ENCODE measurements at regions of chr20 and their contacts with region 1.

Region 1: DNA sequence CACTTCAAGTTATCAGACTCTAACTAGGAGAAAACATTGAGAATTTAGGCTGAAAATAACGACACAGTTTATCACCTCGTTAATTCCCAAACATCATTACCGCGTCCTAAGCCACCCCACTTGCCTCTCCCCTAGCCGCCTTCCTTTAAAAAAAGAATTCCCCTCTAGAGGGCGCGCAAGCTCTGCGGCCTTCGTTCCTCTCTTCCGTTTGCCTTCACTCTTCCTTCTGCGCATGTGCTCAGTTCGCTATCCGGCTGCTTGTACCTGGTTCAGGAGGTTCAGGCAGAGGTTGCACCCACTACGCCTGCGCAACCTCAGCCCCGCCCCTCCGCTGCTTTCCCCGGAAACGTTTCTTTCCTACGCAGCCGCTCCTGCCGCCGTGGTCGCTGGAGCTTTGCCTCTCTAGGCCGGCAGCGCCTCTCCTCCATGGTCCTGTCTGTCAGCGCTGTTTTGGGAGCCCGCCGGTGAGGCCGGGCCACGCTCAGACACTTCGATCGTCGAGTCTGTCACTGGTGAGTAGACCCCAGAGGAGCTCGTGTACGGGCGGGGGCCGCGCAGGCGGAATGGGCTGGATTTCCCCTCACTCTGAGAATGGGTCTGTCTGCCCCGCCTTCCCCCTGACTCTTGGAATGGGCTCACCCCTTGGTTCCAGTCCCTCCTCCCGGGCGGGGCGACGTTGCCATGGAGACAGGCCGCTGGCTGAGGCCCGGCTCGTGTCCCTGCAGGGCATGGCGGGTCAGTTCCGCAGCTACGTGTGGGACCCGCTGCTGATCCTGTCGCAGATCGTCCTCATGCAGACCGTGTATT is at the start of gene SYS1:
- DNase-seq: peak; percentile 99
- H3K4me3 Mint-ChIP-seq: peak within 1 kb of the TSS; percentile 96
- H3K27ac Mint-ChIP-seq: peak within 1 kb of the TSS; percentile 97
- H3K4me1 Mint-ChIP-seq: peaks cover 47% of the 10 kb centered on the region
- H3K27me3 Mint-ChIP-seq: no peaks in the 10 kb centered on the region
- total RNA-seq, gene SYS1: 24.0 to 26.0 TPM

Region 2: GRCh38 chr20:44966030-44966961 is 396.7 kb before region 1 on chr20 and contains the start of gene STK4:
- CTCF ChIA-PET with region 1: no interaction called
- intact Hi-C with region 1: loop called (anchors 5 kb)
- DNase-seq: peak; percentile 96
- H3K4me3 Mint-ChIP-seq: peak within 1 kb of the TSS; percentile 88
- H3K27ac Mint-ChIP-seq: peak within 1 kb of the TSS; percentile 98
- H3K4me1 Mint-ChIP-seq: peaks cover 56% of the 10 kb centered on the region
- H3K27me3 Mint-ChIP-seq: no peaks in the 10 kb centered on the region
- total RNA-seq, gene STK4: 110 to 116 TPM

Region 3: DNA sequence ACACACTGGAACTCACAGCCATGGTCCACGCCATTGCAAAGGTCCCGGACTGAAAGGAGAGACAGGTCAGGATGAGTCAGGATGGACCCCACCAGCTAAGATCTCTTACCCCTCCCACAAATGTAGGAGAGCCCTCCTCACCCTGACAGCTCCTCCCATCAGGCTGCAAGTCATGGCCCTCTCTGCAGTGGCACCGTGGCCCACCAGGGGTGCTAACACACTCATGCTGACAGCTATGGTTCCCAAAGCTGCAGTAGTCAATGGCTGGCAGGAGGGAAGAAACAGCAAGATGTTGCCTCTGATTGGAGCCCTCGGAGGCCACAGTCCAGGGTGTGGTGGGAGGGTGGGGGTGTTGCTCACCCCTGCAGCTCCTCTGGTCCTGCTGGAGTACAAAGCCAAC is 62.0 kb before region 1 on chr20:
- CTCF ChIA-PET with region 1: no interaction called
- intact Hi-C with region 1: no loop called
- DNase-seq: peak; percentile 63
- H3K4me3 Mint-ChIP-seq: no peak overlapping the region
- H3K27ac Mint-ChIP-seq: no peak overlapping the region
- H3K4me1 Mint-ChIP-seq: peaks cover 17% of the 10 kb centered on the region
- H3K27me3 Mint-ChIP-seq: peaks cover 32% of the 10 kb centered on the region

Region 4: DNA sequence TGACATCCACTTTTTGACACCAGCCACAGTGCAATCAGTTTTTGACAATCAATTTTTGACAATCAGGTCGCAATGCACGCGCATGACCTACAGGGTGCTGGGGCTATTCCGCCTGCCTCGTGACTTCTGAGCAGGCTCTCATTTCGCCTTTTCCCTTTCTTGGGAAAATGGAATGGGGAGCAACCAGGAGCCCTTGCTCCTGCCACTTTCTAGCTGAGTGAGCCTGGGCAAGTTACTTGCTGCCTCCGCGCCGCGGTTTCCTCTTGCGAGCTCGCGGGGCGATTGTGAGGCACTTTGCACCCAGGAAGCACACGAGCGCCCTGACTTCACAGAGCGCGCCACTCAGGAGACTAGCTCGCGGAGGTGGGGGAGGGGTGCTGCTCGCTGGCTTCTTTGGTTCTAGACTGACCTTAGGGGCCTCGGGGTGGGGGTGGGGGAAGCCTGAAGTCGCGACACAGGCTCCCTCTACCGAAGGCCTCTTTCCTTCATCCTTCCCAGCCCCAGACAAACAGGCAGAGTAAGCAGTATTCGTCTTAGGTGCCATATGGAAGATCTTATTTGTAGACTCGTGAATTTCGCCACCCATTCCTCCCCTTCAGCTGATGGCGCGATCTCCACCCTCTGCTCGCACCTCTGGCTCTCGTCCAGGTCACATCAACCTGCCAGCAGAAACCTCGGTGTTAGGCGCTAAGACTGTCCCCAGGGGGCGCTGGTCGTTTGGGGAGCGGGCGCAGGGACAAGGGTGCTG is 10.5 kb after region 1 on chr20:
- CTCF ChIA-PET with region 1: interaction called, 118 read pairs
- intact Hi-C with region 1: loop called (anchors 1 kb)
- DNase-seq: peak; percentile 96
- H3K4me3 Mint-ChIP-seq: peak overlapping the region; percentile 83
- H3K27ac Mint-ChIP-seq: peak overlapping the region; percentile 89
- H3K4me1 Mint-ChIP-seq: peaks cover 26% of the 10 kb centered on the region
- H3K27me3 Mint-ChIP-seq: no peaks in the 10 kb centered on the region

Region 5: DNA sequence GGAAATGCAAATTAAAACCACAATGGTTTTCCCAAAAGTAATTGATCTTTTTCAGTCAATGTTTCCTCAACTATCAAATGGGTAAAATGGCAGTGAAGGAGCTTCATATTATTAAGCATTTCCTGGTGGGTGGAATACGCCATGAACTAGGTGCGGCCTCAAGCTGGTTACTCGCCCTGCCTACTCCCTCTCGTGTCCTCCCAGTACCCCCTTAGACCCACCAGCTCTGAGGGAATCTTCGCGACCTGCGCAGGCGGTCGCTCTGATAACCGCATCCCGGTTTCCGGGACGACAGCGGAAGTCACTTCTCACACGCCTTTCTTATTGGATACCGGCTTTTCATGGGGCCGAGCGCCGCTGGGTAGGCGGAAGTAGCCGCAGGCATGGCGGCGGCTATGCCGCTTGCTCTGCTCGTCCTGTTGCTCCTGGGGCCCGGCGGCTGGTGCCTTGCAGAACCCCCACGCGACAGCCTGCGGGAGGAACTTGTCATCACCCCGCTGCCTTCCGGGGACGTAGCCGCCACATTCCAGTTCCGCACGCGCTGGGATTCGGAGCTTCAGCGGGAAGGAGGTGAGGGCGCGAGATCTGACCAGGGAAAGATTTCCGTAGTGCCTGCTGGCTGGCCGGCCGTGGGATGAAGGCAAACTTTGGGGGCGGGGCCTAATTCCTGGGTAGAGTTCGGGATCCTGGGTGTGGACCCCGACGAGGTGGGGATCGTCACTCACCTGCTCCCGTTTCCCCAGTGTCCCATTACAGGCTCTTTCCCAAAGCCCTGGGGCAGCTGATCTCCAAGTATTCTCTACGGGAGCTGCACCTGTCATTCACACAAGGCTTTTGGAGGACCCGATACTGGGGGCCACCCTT is 53.0 kb after region 1 on chr20 and contains the start of gene PIGT:
- CTCF ChIA-PET with region 1: interaction called, 4 read pairs
- intact Hi-C with region 1: loop called (anchors 1 kb)
- DNase-seq: peak; percentile 92
- H3K4me3 Mint-ChIP-seq: peak within 1 kb of the TSS; percentile 93
- H3K27ac Mint-ChIP-seq: peak within 1 kb of the TSS; percentile 97
- H3K4me1 Mint-ChIP-seq: peaks cover 42% of the 10 kb centered on the region
- H3K27me3 Mint-ChIP-seq: no peaks in the 10 kb centered on the region
- total RNA-seq, gene PIGT: 37.7 to 43.8 TPM

Region 6: GRCh38 chr20:45450097-45450818 is 87.3 kb after region 1 on chr20:
- CTCF ChIA-PET with region 1: interaction called, 64 read pairs
- intact Hi-C with region 1: loop called (anchors 1 kb)
- DNase-seq: peak; percentile 30
- H3K4me3 Mint-ChIP-seq: no peak overlapping the region
- H3K27ac Mint-ChIP-seq: no peak overlapping the region
- H3K4me1 Mint-ChIP-seq: no peaks in the 10 kb centered on the region
- H3K27me3 Mint-ChIP-seq: no peaks in the 10 kb centered on the region

Region 7: GRCh38 chr20:47241345-47241781 is 1878.4 kb after region 1 on chr20:
- CTCF ChIA-PET with region 1: no interaction called
- intact Hi-C with region 1: no loop called
- DNase-seq: no peak
- H3K4me3 Mint-ChIP-seq: no peak overlapping the region
- H3K27ac Mint-ChIP-seq: no peak overlapping the region
- H3K4me1 Mint-ChIP-seq: no peaks in the 10 kb centered on the region
- H3K27me3 Mint-ChIP-seq: no peaks in the 10 kb centered on the region

Measured in activated naive CD4-positive, alpha-beta T cell treated with anti-CD3 and anti-CD28 coated beads for 36 hours (primary cell).